Lower leg skin (tissue), 4 donors: ENCODE measurements at regions of chr9 and their contacts with region 1.

Region 1: GRCh38 chr9:121278535-121279261 is 10.7 kb downstream of the GSN start:
- DNase-seq: peak; percentile 88 to 94
- H3K4me3 ChIP-seq: no peak overlapping the region
- CTCF ChIP-seq: peak in 1 of 3 donors; percentile 67
- POLR2A ChIP-seq: no peak

Region 2: DNA sequence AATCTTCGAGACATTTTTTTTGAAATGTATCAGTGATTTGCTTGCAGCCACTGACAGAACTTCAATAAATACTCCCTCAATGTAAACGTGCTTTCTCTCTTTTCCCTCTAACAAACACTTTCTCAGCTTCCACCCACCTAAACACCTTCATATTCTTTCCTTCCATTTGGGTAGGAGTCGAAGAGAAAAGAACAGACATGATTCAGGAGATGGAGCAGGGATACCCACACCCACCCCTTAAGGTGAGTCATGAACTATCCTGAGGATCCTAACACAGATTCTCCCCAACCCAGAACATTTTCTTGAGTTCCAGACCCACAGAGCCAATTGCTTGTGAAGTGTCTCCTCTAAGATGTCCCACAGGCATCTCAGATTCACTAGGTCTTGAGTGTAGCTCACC is 1187.5 kb before region 1 on chr9:
- intact Hi-C with region 1: no loop called
- DNase-seq: no peak
- H3K4me3 ChIP-seq: no peak overlapping the region
- CTCF ChIP-seq: no peak
- POLR2A ChIP-seq: no peak

Region 3: DNA sequence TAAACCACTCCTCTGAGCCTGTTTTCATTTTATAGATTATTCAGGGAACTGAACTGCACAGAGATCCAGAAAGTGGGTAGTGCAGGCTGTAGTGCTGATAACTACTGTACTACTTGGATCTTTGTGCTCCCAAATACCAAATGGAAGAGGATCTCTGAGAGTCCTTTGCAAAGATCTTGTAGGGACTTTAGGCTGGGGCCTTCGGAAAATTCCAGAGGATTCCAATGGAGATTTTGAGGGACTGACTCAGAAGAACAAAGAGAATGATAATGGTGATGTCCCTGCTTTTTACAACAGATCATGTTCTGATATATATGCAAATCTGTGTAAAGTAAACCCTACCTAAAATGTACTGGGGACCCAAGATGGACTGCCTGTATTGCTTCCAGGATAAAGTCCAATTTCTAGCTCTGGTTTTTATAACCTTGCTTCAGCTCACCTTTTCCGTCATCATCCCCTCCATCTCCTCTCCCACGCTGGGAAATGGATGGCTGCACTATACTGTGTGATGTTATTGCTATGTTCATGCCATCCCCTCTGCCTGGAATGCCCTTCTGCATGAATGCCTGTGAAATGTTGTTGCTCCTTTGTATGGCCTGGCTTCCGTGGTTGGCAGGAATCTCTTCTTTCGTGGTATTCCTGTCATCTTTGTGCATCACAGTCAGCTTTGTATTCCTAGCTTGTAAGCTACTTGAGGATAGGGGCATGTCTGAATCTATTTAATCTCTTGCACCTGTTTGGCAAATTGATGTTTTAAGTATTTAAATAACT is 426.3 kb before region 1 on chr9:
- intact Hi-C with region 1: no loop called
- DNase-seq: no peak
- H3K4me3 ChIP-seq: no peak overlapping the region
- CTCF ChIP-seq: no peak
- POLR2A ChIP-seq: no peak

Region 4: GRCh38 chr9:121204611-121205010 is 74.1 kb before region 1 on chr9:
- intact Hi-C with region 1: loop called (anchors 1 kb)
- DNase-seq: no peak
- H3K4me3 ChIP-seq: no peak overlapping the region
- CTCF ChIP-seq: no peak
- POLR2A ChIP-seq: no peak